ENCODE measurements at regions of chr1 and their contacts with region 1.

Region 1: GRCh38 chr1:15323351-15323988 is 76.4 kb downstream of the FHAD1 start:
- DNase-seq: peak; percentile 69
- H3K4me3 ChIP-seq: no peak overlapping the region
- H3K27ac ChIP-seq: no peak overlapping the region
- H3K4me1 ChIP-seq: no peaks in the 10 kb centered on the region
- CTCF ChIP-seq: peak; percentile 98

Region 2: GRCh38 chr1:15430787-15431570 is 107.5 kb after region 1 on chr1:
- CTCF ChIA-PET with region 1: no interaction called
- POLR2A ChIA-PET with region 1: interaction called, 3 read pairs
- intact Hi-C with region 1: loop called (anchors 1 kb)
- DNase-seq: peak; percentile 55
- H3K4me3 ChIP-seq: no peak overlapping the region
- H3K27ac ChIP-seq: no peak overlapping the region
- H3K4me1 ChIP-seq: no peaks in the 10 kb centered on the region
- CTCF ChIP-seq: peak; percentile 96

Region 3: DNA sequence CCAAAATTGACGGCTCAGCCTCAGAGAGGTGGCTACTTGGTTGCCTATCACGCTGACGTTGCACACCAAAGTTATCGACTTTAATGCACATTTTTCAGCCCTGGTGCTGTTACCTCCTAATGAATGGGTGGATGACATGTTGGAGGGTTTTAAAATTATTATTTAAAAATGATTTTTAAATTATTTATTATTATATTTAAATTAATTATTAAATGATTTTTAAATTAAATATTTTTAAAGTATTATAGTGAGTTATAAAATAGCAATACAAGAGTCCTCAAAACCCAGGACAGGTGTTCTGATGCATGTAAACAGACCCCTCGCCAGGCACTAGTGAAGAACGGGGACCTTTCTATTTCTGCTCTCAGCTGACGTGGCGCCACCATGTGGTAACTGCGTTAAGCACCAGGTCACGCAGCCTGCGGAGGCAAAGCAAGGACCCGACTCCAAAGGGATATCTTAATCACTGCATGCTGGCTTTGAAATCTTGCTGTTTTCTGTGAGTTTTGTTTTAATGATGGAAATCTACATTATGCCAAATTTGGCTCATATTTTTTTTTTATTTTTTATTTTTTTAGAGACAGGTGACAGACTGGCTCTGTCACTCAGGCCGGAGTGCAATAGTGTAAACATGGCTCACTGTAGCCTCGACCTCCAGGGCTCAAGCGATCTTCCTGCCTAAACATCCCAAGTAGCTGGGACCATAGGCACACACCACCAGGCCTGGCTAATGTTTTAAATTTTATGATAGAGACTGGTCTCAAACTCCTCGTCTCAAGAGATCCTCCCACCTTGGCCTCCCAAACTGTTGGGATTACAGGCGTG is 177.9 kb after region 1 on chr1:
- CTCF ChIA-PET with region 1: no interaction called
- POLR2A ChIA-PET with region 1: no interaction called
- intact Hi-C with region 1: loop called (anchors 1 kb)
- DNase-seq: peak; percentile 69
- H3K4me3 ChIP-seq: no peak overlapping the region
- H3K27ac ChIP-seq: no peak overlapping the region
- H3K4me1 ChIP-seq: no peaks in the 10 kb centered on the region
- CTCF ChIP-seq: peak; percentile 94